ENCODE measurements at regions of chr10 and their contacts with region 1.

Region 1: DNA sequence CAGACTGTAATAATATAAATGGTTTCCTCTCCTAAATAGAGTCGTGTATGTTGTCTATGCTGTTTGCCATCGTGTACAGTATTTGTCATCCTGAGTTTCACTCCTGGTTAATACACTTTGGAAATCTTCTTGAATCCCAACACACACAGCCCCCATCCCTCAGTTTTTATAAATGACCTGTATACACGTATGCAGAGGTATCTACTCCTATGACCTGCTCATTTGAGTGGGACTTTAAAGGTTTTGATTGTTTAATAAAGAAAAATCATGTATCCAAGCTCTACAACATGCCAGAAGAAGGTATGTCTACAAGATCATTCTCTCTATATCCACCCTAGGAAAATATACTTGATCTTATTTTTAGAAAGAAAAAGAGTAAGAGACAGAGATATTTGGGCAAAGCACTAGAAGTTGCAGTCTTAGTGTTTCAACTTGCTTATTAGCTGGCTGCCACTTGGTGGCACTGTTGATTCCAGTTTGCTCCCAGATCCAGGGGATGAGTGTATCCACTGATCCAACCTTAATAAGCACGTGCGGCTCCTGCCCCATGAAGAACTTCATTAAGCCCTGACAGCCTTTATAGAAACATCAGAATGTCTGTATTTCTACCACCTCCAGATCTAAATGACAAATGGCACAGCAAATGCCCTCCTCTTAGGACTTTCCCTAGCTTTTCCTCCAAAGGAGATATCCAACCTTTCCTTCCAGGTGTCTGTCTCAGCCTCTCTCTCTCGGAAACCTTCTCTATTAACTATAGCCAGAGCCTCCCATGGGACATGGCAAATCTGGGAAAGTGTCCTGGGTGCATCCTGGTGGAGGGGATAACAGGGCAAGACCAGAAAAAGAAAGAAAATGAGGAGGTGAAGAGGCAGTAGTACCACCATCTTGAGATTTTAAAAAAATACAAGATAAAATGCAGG is 181.6 kb upstream of the NEBL start:
- DNase-seq: peak; percentile 63
- H3K4me3 ChIP-seq: peak overlapping the region in 1 of 2 experiments; percentile 25; a peak in 1 of 4 replicates
- H3K27ac ChIP-seq: no peak overlapping the region
- H3K4me1 ChIP-seq: peaks cover 0 to 3% of the 10 kb centered on the region in 2 experiments; a peak in 1 of 4 replicates
- H3K27me3 ChIP-seq: no peaks in the 10 kb centered on the region
- CTCF ChIP-seq: peak; percentile 87
- EP300 ChIP-seq: no peak
- RAD21 ChIP-seq: peak; percentile 98

Region 2: DNA sequence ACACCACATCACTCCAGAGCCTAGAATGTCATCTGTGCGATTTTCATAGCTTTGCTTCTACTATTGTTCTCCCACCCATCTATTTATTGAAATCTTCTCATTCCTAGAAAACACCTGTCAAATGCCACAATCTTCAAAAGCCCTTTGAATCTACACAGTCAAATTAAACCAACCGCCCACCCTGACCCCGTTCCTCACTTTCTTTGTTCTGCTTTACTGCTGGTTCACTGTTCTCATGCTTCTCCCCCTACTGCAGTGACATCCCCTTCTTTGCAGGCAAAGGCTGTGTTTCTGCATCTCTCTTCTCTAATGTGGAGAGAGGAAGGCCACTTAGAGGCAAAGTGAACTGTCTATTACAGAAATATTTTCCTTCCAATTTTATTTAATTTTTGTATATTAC is 29.2 kb before region 1 on chr10:
- CTCF ChIA-PET with region 1: no interaction called
- POLR2A ChIA-PET with region 1: no interaction called
- DNase-seq: no peak
- H3K4me3 ChIP-seq: no peak overlapping the region
- H3K27ac ChIP-seq: no peak overlapping the region
- H3K4me1 ChIP-seq: peaks cover 0 to 2% of the 10 kb centered on the region in 2 experiments; a peak in 2 of 4 replicates
- H3K27me3 ChIP-seq: no peaks in the 10 kb centered on the region
- CTCF ChIP-seq: no peak
- EP300 ChIP-seq: no peak
- RAD21 ChIP-seq: no peak

Region 3: GRCh38 chr10:21100871-21101514 is 22.3 kb after region 1 on chr10:
- CTCF ChIA-PET with region 1: interaction called, 10 read pairs
- POLR2A ChIA-PET with region 1: interaction called, 4 read pairs
- DNase-seq: no peak
- H3K4me3 ChIP-seq: no peak overlapping the region; a peak in 1 of 4 replicates
- H3K27ac ChIP-seq: peak overlapping the region; percentile 71 to 93
- H3K4me1 ChIP-seq: peaks cover 14 to 32% of the 10 kb centered on the region in 2 experiments
- H3K27me3 ChIP-seq: no peaks in the 10 kb centered on the region
- CTCF ChIP-seq: no peak
- EP300 ChIP-seq: peak in 1 of 2 experiments; percentile 31; a peak in 1 of 4 replicates
- RAD21 ChIP-seq: no peak

Region 4: GRCh38 chr10:21292763-21293517 is 214.3 kb after region 1 on chr10:
- CTCF ChIA-PET with region 1: no interaction called
- POLR2A ChIA-PET with region 1: no interaction called
- DNase-seq: no peak
- H3K4me3 ChIP-seq: peak overlapping the region; percentile 27 to 52; a peak in 3 of 4 replicates
- H3K27ac ChIP-seq: peak overlapping the region; percentile 31 to 68; a peak in 3 of 4 replicates
- H3K4me1 ChIP-seq: peaks cover 2 to 18% of the 10 kb centered on the region in 2 experiments
- H3K27me3 ChIP-seq: no peaks in the 10 kb centered on the region
- CTCF ChIP-seq: no peak
- EP300 ChIP-seq: peak in 1 of 2 experiments; percentile 88; a peak in 2 of 4 replicates
- RAD21 ChIP-seq: no peak